Activated CD4-positive, alpha-beta T cell treated with anti-CD3 and anti-CD28 coated beads for 36 hours (primary cell): ENCODE measurements at regions of chr17 and their contacts with region 1.

Region 1: GRCh38 chr17:30970831-30971567 is at the start of gene RNF135:
- DNase-seq: peak; percentile 76
- ATAC-seq: peak; percentile 73
- H3K4me3 Mint-ChIP-seq: peak within 1 kb of the TSS; percentile 93
- H3K27ac Mint-ChIP-seq: peak within 1 kb of the TSS; percentile 95
- H3K4me1 Mint-ChIP-seq: peaks cover 36% of the 10 kb centered on the region
- H3K27me3 Mint-ChIP-seq: peaks cover 9% of the 10 kb centered on the region
- total RNA-seq, gene RNF135: 5.8 to 6.0 TPM

Region 2: DNA sequence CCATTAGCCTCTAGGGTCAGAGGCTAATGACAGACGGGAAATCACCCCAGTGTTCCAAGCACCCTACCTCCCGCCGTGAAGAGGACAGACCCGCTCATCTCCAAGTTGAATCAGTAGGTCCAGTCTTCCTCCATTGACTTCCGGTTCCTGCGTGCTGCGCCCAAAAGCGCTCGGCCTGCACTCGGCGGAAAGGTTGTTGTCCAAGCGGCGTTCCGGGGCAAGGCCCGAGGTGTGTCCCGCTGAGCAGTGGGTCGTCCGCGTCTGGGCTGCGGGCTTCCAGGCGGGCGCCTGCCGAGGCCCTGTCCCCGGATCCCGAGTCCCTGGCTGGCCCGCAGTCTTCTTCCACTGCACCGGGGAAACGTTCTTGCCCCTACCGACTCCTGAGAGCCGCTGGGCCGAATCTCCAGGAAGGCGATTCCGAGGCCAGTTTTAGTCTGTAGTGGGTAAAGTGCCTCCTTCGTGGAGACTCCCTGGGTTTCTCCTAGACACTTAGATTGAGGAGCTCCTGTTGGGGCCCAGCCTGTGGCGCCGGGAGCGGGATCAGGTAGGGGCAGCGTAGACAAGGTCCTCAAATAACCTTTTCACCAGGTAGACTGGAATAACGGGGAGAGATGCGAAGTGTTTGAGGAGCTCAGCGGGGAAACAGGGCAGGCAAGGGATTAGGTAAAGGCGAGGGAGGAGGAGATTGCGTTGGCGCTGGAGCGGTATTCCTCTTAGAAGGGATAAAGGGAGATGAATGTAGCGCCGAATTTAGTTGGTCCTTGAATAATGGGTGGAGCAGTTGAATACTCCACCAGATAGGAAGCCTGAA is 64.7 kb before region 1 on chr17 and contains the start of gene TEFM:
- CTCF ChIA-PET with region 1: interaction called, 5 read pairs
- POLR2A ChIA-PET with region 1: no interaction called
- intact Hi-C with region 1: loop called (anchors 1 to 5 kb)
- DNase-seq: peak; percentile 93
- ATAC-seq: peak; percentile 97
- H3K4me3 Mint-ChIP-seq: peak within 1 kb of the TSS; percentile 88
- H3K27ac Mint-ChIP-seq: peak within 1 kb of the TSS; percentile 87
- H3K4me1 Mint-ChIP-seq: peaks cover 41% of the 10 kb centered on the region
- H3K27me3 Mint-ChIP-seq: no peaks in the 10 kb centered on the region
- total RNA-seq, gene TEFM: 13.4 to 15.3 TPM

Region 3: DNA sequence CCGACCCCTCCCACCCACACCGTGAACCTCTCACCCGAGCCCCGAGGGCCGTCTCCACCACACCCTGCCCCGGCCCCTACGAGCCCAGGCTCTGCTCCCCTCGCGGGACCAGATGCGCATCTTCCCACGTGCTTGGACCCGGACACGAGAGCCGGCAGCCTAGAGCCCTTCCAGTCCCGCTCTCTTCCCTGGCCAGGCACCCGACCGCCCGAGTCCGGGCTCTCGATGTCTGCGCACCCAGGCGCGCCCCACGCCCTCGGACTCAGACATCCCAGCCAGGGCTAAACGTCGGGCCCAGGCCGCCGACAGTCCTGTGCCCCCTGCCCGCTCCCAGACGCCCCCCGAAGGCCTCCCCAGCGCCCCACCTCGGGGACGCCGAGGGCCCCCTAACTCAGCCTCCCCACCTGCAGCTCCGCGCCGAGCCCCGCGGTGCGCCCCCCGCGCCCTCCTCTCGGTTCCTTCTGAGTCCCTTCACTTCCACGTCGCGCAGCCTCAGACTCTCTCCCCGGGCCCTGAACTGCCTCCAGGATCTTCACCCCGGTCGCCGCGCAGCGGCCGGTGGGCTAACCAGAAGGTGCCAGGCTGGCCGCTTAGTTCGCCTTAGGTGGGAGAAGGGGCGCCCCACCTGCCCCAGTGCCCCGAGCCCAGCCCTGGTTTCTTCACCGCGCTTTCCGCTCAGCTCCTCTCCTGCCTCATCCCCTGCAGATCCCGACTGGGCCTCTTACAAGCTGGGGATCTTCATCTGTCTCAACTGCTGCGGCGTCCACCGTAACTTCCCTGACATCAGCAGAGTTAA is 48.6 kb before region 1 on chr17:
- CTCF ChIA-PET with region 1: interaction called, 5 read pairs
- POLR2A ChIA-PET with region 1: no interaction called
- intact Hi-C with region 1: loop called in 1 of 2 experiments (anchors 1 kb)
- DNase-seq: peak; percentile 16
- ATAC-seq: peak; percentile 42
- H3K4me3 Mint-ChIP-seq: peak overlapping the region; percentile 48
- H3K27ac Mint-ChIP-seq: no peak overlapping the region
- H3K4me1 Mint-ChIP-seq: peaks cover 9% of the 10 kb centered on the region
- H3K27me3 Mint-ChIP-seq: peaks cover 39% of the 10 kb centered on the region

Region 4: DNA sequence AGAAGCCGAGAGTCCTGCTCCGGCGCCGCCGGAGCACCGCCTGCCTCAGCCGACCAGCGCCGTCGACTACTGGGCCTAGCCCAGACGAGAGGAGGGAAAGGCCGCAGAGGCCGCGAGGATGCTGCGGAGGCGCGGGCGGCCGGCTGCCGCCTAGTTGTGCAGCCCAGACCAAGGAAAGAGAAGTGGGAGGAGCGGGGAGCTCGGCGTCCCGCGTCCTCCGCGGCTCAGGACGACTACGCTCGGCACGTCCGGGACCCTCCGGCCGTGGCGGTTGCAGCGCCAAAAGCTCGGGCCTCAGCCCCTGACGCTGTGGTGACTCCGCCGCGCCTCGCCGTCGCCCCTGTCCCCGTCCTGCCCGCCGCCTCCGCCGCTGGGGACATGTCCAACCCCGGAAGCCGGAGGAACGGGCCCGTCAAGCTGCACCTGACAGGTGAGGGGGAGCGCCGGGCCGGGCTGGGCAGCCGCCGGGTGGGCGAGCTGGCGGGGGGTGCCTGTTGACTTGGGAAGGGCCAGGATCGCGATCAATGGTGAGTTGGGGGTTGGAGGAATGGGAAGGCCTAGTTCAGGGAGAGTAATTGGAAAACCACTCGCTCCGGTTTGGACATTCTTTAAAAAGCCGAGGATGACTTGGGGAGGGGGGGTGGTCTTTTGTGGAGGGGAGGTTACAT is 37.5 kb after region 1 on chr17:
- CTCF ChIA-PET with region 1: interaction called, 3 read pairs
- POLR2A ChIA-PET with region 1: interaction called, 4 read pairs
- intact Hi-C with region 1: loop called (anchors 1 to 5 kb)
- DNase-seq: peak; percentile 70
- ATAC-seq: peak; percentile 71
- H3K4me3 Mint-ChIP-seq: peak overlapping the region; percentile 73
- H3K27ac Mint-ChIP-seq: peak overlapping the region; percentile 75
- H3K4me1 Mint-ChIP-seq: peaks cover 18% of the 10 kb centered on the region
- H3K27me3 Mint-ChIP-seq: peaks cover 5% of the 10 kb centered on the region

Region 5: GRCh38 chr17:31068291-31068690 is 97.3 kb after region 1 on chr17:
- CTCF ChIA-PET with region 1: interaction called, 3 read pairs
- POLR2A ChIA-PET with region 1: no interaction called
- intact Hi-C with region 1: loop called (anchors 5 kb)
- DNase-seq: peak; percentile 82
- ATAC-seq: peak; percentile 91
- H3K4me3 Mint-ChIP-seq: no peak overlapping the region
- H3K27ac Mint-ChIP-seq: no peak overlapping the region
- H3K4me1 Mint-ChIP-seq: peaks cover 2% of the 10 kb centered on the region
- H3K27me3 Mint-ChIP-seq: no peaks in the 10 kb centered on the region

Region 6: DNA sequence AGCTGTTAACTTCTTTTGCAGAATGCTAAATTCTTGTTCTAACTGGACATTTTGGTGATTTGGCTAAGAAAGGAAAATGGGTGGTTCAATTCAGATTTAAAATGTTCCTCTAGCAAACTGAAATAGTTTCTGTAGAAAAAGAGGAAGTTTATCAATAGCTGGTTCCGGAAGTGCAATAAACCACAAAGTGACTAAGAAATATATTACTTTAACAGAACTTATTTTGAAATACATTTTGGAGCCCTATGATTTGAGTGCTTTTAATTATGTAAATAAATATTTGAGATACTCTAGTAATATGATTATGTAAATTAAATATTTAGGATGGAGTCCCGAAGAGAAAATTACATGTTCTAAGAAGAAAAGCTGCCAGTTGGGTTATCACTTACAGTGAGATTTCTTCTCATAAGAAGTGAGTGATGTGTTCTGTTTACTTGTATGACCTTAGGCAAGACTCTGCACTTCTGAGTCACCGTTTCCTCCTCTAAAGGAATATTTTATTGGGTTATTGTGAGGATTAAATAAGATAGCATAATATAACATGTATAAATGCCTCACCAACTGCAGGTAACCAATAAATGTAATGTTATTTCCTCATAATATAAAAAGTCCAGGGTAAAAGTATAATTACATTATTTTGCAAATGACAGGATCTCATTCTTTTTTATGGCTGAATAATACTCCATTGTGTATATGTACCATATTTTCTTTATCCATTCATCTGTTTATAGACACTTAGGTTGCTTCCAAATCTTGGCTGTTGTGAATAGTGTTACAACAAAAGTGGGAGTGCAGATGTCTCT is 343.2 kb after region 1 on chr17 and contains the start of gene EVI2B:
- CTCF ChIA-PET with region 1: no interaction called
- POLR2A ChIA-PET with region 1: no interaction called
- intact Hi-C with region 1: loop called in 1 of 2 experiments (anchors 5 kb)
- DNase-seq: peak; percentile 30
- ATAC-seq: peak; percentile 43
- H3K4me3 Mint-ChIP-seq: peak within 1 kb of the TSS; percentile 79
- H3K27ac Mint-ChIP-seq: peak within 1 kb of the TSS; percentile 93
- H3K4me1 Mint-ChIP-seq: peaks cover 48% of the 10 kb centered on the region
- H3K27me3 Mint-ChIP-seq: no peaks in the 10 kb centered on the region
- total RNA-seq, gene EVI2B: 10.3 to 14.8 TPM

Region 7: DNA sequence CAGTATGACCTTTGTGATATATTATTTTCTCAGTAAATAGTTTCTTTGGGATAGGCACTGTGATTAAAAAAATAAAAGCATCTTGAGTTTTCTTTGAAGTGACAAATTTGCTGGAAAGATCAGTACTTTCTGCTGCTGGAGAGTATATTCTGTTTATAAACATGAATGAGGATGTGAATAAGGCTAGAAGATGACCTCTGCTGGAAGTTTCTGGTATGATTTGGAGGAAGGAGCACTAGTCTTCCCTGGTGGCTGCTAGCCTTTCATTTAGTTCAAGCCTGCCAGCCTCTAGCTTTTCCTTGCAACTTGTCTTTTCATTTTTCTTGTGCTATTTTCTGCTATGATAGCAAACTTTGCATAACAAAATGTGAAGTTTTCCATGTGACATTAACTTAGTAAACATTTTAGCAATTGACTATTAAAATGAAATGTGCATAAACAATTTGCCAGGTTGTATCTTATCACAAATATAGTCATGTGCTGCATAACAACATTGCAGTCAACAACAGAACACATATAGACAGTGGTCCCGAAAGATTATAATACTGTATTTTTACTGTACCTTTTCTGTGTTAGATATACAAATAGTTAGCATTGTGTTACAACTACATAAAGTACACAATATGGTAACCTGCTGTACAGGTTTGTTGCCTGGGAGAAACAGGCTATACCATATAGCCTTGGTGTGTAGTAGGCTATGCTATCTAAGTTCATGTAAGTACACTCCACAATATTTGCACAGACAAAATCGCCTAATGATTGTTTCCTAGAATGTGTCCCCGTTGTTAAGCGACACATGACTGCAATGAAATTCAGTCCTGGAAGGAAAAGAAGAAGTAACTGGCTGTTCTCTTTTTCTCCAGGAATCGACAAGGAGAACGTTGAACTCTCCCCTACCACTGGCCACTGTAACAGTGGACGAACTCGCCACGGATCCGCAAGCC is 402.4 kb after region 1 on chr17:
- CTCF ChIA-PET with region 1: interaction called, 4 read pairs
- POLR2A ChIA-PET with region 1: no interaction called
- intact Hi-C with region 1: loop called in 1 of 2 experiments (anchors 5 kb)
- DNase-seq: peak; percentile 27
- ATAC-seq: peak; percentile 85
- H3K4me3 Mint-ChIP-seq: no peak overlapping the region
- H3K27ac Mint-ChIP-seq: no peak overlapping the region
- H3K4me1 Mint-ChIP-seq: peaks cover 22% of the 10 kb centered on the region
- H3K27me3 Mint-ChIP-seq: no peaks in the 10 kb centered on the region